Endothelial cell of umbilical vein (primary cell): ENCODE measurements at regions of chr14 and their contacts with region 1.

Region 1: GRCh38 chr14:54169254-54169924 is 212.8 kb upstream of the BMP4 start:
- DNase-seq: peak; percentile 90
- H3K4me3 ChIP-seq: no peak overlapping the region
- H3K27ac ChIP-seq: peak overlapping the region; percentile 59
- H3K4me1 ChIP-seq: peaks cover 54% of the 10 kb centered on the region
- H3K27me3 ChIP-seq: no peaks in the 10 kb centered on the region
- CTCF ChIP-seq: no peak
- POLR2A ChIP-seq: no peak

Region 2: GRCh38 chr14:54147282-54147681 is 22.1 kb before region 1 on chr14:
- CTCF ChIA-PET with region 1: no interaction called
- POLR2A ChIA-PET with region 1: no interaction called
- dilution Hi-C with region 1: no loop called
- intact Hi-C with region 1: loop called (anchors 1 kb)
- DNase-seq: peak; percentile 77
- H3K4me3 ChIP-seq: no peak overlapping the region
- H3K27ac ChIP-seq: peak overlapping the region; percentile 66
- H3K4me1 ChIP-seq: peaks cover 17% of the 10 kb centered on the region
- H3K27me3 ChIP-seq: no peaks in the 10 kb centered on the region
- CTCF ChIP-seq: no peak
- POLR2A ChIP-seq: no peak